ENCODE measurements at regions of chr15 and their contacts with region 1.

Region 1: DNA sequence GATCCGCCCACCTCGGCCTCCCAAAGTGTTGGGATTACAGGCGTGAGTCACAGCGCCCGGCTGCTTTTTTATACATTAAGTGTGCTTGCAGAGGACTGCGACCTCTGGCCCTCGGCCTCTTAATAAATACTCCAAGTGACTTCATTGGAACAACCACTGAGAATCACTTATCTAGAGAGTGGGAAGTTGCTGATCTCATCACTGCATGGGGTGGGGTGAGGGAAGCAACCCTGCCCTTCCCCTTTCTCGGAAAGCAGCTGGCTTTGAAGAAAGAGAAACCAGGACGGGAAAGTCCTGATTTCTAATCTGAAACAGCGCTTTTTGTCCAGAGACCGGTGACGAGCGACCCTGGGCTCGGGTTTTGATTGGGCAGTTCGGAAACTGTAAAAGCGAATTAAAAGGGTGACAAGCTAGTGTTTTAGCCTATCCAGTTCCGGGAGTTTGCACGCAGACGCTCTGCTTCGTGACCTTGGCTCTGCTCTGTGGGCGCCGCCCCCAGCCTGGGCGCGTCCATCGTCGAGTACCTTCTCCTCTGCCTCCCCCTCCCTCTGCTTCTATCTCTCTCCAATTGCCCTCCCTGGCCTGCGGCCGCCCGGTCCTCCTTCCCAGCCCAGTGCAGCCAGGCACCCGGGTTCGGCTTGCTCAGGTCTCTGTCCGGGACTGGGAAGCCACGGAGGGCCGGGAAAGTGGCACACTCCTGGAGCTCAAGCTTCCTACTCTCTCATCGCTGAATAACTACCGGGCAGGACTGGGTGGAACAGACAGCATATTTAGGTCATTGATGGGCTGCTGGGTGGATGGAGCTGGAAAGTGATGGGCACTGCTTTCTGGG is 7.5 kb upstream of the TRIM69 start:
- DNase-seq: peak; percentile 97
- H3K4me3 Mint-ChIP-seq: peak overlapping the region; percentile 100
- H3K27ac Mint-ChIP-seq: peak overlapping the region; percentile 100
- H3K4me1 Mint-ChIP-seq: peaks cover 66% of the 10 kb centered on the region
- H3K27me3 Mint-ChIP-seq: no peaks in the 10 kb centered on the region

Region 2: DNA sequence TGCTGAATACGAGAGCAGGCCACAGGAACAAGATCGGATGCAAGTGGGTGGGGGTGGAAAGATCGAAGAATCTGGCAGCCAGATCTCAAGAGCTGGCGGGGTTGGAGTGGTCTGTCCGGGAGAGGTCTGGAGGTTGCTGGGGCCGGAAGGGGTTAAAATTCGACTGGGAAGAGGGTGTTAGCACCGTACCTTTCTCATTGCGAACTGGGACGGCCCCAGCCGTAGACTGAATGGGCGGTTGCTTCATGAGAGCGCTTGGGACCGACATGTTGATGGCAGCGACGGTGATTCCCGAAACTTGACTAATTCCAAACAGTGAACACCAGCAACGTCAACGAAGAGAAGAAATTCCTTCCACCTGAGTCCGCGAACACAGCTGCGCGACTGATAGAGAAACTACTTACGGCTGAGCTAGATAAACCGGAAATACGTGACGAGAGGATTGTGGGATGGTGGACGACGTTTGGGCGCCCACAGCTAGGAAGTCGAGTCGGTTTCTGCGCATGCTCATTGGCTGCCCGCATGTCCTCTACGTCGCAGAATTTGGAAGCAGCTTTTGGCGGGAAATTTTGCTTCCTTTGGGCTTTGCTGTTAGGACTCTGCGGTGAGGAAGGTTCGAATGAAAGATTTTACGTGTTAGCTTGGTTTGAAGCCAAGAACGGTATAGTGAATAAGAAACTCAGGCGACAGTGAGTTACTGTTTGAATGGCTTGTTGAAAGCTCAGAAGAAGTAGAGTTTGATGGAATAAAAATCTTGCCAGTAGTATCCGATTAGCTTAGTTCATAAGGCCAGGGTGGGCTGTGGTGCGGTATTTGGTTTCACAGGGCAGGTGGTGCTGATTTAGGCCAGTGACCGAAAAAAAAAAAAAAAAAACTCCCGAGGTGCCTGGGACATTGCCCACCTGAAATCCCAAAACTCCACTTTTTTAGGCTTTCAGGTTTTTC is 904.2 kb before region 1 on chr15 and contains the start of gene MFAP1:
- CTCF ChIA-PET with region 1: no interaction called
- POLR2A ChIA-PET with region 1: interaction called, 5 read pairs
- intact Hi-C with region 1: loop called (anchors 10 kb)
- DNase-seq: peak; percentile 96
- H3K4me3 Mint-ChIP-seq: peak within 1 kb of the TSS; percentile 99
- H3K27ac Mint-ChIP-seq: peak within 1 kb of the TSS; percentile 97
- H3K4me1 Mint-ChIP-seq: peaks cover 56% of the 10 kb centered on the region
- H3K27me3 Mint-ChIP-seq: no peaks in the 10 kb centered on the region
- total RNA-seq, gene MFAP1: 37.2 to 38.0 TPM

Region 3: GRCh38 chr15:44414001-44414400 is 314.8 kb before region 1 on chr15:
- CTCF ChIA-PET with region 1: no interaction called
- POLR2A ChIA-PET with region 1: no interaction called
- intact Hi-C with region 1: no loop called
- DNase-seq: peak; percentile 27
- H3K4me3 Mint-ChIP-seq: no peak overlapping the region
- H3K27ac Mint-ChIP-seq: no peak overlapping the region
- H3K4me1 Mint-ChIP-seq: peaks cover 4% of the 10 kb centered on the region
- H3K27me3 Mint-ChIP-seq: no peaks in the 10 kb centered on the region

Region 4: GRCh38 chr15:44663409-44664308 is 65.1 kb before region 1 on chr15 and contains the start of gene SPG11:
- CTCF ChIA-PET with region 1: interaction called, 209 read pairs
- POLR2A ChIA-PET with region 1: interaction called, 179 read pairs
- intact Hi-C with region 1: loop called (anchors 1 kb)
- DNase-seq: peak; percentile 99
- H3K4me3 Mint-ChIP-seq: peak within 1 kb of the TSS; percentile 97
- H3K27ac Mint-ChIP-seq: peak within 1 kb of the TSS; percentile 97
- H3K4me1 Mint-ChIP-seq: peaks cover 58% of the 10 kb centered on the region
- H3K27me3 Mint-ChIP-seq: no peaks in the 10 kb centered on the region
- total RNA-seq, gene SPG11: 84.6 to 86.8 TPM

Region 5: DNA sequence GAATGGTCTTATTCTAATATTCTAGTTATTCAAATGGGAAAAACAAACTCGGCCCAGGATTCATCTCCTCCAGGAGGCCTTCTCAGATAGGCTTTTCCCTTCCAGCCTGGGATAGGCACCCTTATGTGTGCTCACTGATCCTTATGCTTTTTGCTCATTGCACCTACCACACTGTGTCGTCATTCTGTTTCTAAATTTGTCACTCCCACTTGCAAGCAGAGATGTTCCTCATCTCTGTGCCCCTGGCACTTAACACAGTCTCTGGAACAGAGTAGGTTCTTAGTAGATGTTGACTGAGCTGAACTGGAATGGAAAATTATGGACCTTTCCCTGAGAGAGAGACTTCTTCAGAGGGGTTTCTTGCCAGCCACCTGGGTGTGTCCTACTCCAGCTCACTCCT is 46.6 kb before region 1 on chr15:
- CTCF ChIA-PET with region 1: interaction called, 3 read pairs
- POLR2A ChIA-PET with region 1: interaction called, 25 read pairs
- intact Hi-C with region 1: loop called (anchors 1 kb)
- DNase-seq: peak; percentile 32
- H3K4me3 Mint-ChIP-seq: peak overlapping the region; percentile 68
- H3K27ac Mint-ChIP-seq: peak overlapping the region; percentile 94
- H3K4me1 Mint-ChIP-seq: peaks cover 73% of the 10 kb centered on the region
- H3K27me3 Mint-ChIP-seq: no peaks in the 10 kb centered on the region

Region 6: GRCh38 chr15:44753345-44753744 is 24.6 kb after region 1 on chr15:
- CTCF ChIA-PET with region 1: interaction called, 3 read pairs
- POLR2A ChIA-PET with region 1: no interaction called
- intact Hi-C with region 1: loop called (anchors 2 kb)
- DNase-seq: no peak
- H3K4me3 Mint-ChIP-seq: no peak overlapping the region
- H3K27ac Mint-ChIP-seq: no peak overlapping the region
- H3K4me1 Mint-ChIP-seq: peaks cover 34% of the 10 kb centered on the region
- H3K27me3 Mint-ChIP-seq: no peaks in the 10 kb centered on the region